HCT116 (cell line): ENCODE measurements at regions of chr18 and their contacts with region 1.

Region 1: GRCh38 chr18:28248653-28249052 is 71.7 kb upstream of the CDH2 start:
- DNase-seq: no peak
- ATAC-seq: no peak
- H3K4me3 ChIP-seq: no peak overlapping the region
- H3K27ac ChIP-seq: no peak overlapping the region
- H3K4me1 ChIP-seq: no peaks in the 10 kb centered on the region
- H3K27me3 ChIP-seq: no peaks in the 10 kb centered on the region
- CTCF ChIP-seq: no peak
- POLR2A ChIP-seq: no peak
- RAD21 ChIP-seq: no peak

Region 2: GRCh38 chr18:28167835-28168349 is 80.8 kb before region 1 on chr18:
- CTCF ChIA-PET with region 1: no interaction called
- POLR2A ChIA-PET with region 1: no interaction called
- RAD21 ChIA-PET with region 1: no interaction called
- intact Hi-C with region 1: no loop called
- DNase-seq: no peak
- ATAC-seq: no peak
- H3K4me3 ChIP-seq: no peak overlapping the region
- H3K27ac ChIP-seq: no peak overlapping the region
- H3K4me1 ChIP-seq: no peaks in the 10 kb centered on the region
- H3K27me3 ChIP-seq: no peaks in the 10 kb centered on the region
- CTCF ChIP-seq: no peak
- POLR2A ChIP-seq: no peak
- RAD21 ChIP-seq: no peak

Region 3: DNA sequence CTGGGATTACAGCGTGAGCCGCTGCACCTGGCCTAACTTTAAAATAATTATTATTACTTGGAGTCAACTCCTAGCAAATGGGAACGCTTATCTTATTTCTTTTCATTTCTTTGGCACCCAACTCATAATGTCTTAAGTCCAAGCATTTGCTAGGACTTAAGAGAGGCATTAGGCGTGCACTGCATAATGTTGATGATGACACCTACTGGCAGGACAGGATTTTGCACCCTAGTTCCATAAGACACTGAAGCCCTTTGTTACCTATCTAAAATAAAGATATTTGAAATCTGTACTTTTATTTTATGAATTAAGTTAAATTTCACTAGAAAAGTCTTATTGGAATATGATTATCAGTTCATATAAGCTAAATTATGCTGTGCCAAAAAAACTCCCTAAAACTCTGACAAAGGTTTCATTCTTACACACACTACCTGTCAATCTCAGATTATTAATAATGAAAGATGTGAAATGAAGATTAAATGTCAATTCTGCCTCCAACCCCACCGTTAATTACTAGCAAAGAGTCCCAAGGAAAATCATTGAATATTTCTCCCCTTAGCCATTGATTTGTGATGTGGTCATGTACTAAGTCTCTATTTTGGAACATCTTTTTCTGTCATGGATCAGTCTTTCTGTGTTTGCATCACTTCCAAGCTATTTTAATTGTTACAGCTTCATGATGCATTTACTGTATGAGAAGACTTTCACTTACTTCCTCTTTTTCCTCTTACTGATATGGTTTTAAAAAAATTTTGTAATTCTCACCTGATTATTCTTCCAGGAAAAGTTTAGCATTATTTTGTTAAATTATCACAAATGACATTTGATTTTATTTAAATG is 59.0 kb before region 1 on chr18:
- CTCF ChIA-PET with region 1: no interaction called
- POLR2A ChIA-PET with region 1: no interaction called
- RAD21 ChIA-PET with region 1: no interaction called
- intact Hi-C with region 1: loop called (anchors 10 kb)
- DNase-seq: peak; percentile 23
- ATAC-seq: peak; percentile 63; the same call in 1 of the 2 replicates
- H3K4me3 ChIP-seq: no peak overlapping the region
- H3K27ac ChIP-seq: no peak overlapping the region
- H3K4me1 ChIP-seq: no peaks in the 10 kb centered on the region
- H3K27me3 ChIP-seq: no peaks in the 10 kb centered on the region
- CTCF ChIP-seq: peak in 2 of 3 experiments; percentile 58 to 59; a peak in 4 of 6 replicates
- POLR2A ChIP-seq: no peak
- RAD21 ChIP-seq: peak; percentile 37; the same call in 1 of the 2 replicates

Region 4: GRCh38 chr18:28390022-28390421 is 141.4 kb after region 1 on chr18:
- CTCF ChIA-PET with region 1: no interaction called
- POLR2A ChIA-PET with region 1: no interaction called
- RAD21 ChIA-PET with region 1: no interaction called
- intact Hi-C with region 1: no loop called
- DNase-seq: no peak
- ATAC-seq: no peak
- H3K4me3 ChIP-seq: no peak overlapping the region
- H3K27ac ChIP-seq: no peak overlapping the region
- H3K4me1 ChIP-seq: no peaks in the 10 kb centered on the region
- H3K27me3 ChIP-seq: no peaks in the 10 kb centered on the region
- CTCF ChIP-seq: no peak
- POLR2A ChIP-seq: no peak
- RAD21 ChIP-seq: no peak

Region 5: GRCh38 chr18:29605365-29605764 is 1356.7 kb after region 1 on chr18:
- CTCF ChIA-PET with region 1: no interaction called
- POLR2A ChIA-PET with region 1: no interaction called
- RAD21 ChIA-PET with region 1: no interaction called
- intact Hi-C with region 1: no loop called
- DNase-seq: no peak
- ATAC-seq: no peak
- H3K4me3 ChIP-seq: no peak overlapping the region
- H3K27ac ChIP-seq: no peak overlapping the region
- H3K4me1 ChIP-seq: no peaks in the 10 kb centered on the region
- H3K27me3 ChIP-seq: no peaks in the 10 kb centered on the region
- CTCF ChIP-seq: no peak
- POLR2A ChIP-seq: no peak
- RAD21 ChIP-seq: no peak